ENCODE measurements at regions of chr6 and their contacts with region 1.

Region 1: DNA sequence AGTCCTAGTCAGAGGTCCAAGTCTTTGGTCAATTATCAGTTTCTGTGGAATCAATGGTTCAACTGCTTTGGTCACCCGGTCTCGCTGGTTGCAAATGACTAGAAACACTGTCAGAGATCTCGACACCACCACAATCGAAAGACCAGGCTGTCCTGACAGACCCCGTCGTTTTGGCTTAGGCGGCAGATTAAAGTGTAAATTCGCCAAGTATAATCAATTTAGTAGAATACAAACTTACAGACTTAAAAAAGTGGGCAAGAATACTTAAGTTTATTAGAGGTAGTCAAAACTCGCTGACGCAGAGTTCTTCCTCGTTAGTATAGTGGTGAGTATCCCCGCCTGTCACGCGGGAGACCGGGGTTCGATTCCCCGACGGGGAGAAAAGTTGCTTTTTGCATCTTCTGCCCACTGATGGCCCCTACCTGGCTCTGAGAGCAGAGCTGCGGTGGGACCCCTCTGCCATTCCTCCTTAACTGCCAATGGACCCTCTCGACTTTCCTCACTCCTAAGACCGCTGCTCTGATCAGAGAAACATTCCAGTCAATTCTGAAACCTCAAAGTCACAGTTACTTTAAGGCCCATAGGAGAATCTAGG is 30.6 kb upstream of the ZNF184 start:
- DNase-seq: peak; percentile 79 to 82 (median 80)
- H3K4me3 ChIP-seq: peak overlapping the region; percentile 79
- H3K4me3 Mint-ChIP-seq: peak overlapping the region; percentile 87 to 94 (median 90)
- H3K27ac ChIP-seq: peak overlapping the region; percentile 9
- H3K27ac Mint-ChIP-seq: peak overlapping the region; percentile 78 to 99 (median 91)
- H3K4me1 ChIP-seq: peaks cover 36% of the 10 kb centered on the region
- H3K4me1 Mint-ChIP-seq: peaks cover 25 to 44% (median 33%) of the 10 kb centered on the region in 4 donors
- H3K27me3 ChIP-seq: peaks cover 4% of the 10 kb centered on the region
- H3K27me3 Mint-ChIP-seq: peaks cover 0 to 25% of the 10 kb centered on the region in 2 donors

Region 2: GRCh38 chr6:27472617-27473400 is 30.7 kb before region 1 on chr6 and contains the start of gene ZNF184:
- CTCF ChIA-PET with region 1: no interaction called
- POLR2A ChIA-PET with region 1: interaction called, 31 read pairs
- intact Hi-C with region 1: no loop called
- DNase-seq: peak; percentile 86 to 90 (median 89)
- H3K4me3 ChIP-seq: peak within 1 kb of the TSS; percentile 70 to 98
- H3K4me3 Mint-ChIP-seq: peak within 1 kb of the TSS; percentile 92 to 99 (median 96)
- H3K27ac ChIP-seq: peak within 1 kb of the TSS; percentile 92
- H3K27ac Mint-ChIP-seq: peak within 1 kb of the TSS; percentile 93 to 99 (median 96)
- H3K4me1 ChIP-seq: peaks cover 56% of the 10 kb centered on the region
- H3K4me1 Mint-ChIP-seq: peaks cover 33 to 65% (median 43%) of the 10 kb centered on the region in 4 donors
- H3K27me3 ChIP-seq: no peaks in the 10 kb centered on the region
- H3K27me3 Mint-ChIP-seq: no peaks in the 10 kb centered on the region
- total RNA-seq, gene ZNF184: 15.2 to 17.4 TPM

Measured in CD4-positive, alpha-beta memory T cell (primary cell).